ENCODE measurements at regions of chr22 and their contacts with region 1.

Region 1: DNA sequence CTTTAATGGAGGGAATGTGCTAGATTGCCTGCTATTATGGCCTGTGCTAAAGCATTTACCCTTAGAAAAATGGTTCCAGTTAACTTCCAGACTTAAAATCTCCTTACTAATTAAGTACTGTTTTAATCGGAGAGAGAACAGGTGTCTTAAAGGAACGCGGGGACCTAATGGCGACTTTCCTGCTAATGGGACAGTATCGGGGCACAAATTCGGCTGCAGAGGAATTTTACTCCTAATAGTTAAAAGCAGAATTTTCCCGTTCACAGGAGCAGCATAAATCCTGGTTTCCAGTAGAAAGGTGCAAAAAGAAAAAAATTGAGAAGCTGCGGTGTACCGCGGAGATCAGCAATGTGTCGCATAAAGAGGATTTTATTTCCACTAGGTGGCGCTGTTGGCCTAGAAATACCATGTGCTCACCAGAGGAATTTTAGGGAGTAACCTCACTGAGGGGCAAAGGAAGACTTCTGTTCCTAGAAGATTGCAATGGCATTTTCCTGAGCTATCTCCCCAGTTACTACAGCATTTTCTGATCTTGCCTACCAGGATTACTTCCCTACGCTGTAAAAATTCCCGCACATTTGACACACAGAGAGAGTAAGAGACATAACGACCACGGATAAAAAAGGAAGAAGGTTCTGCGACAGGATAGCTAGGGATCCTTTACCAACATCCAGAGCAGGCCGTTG is 44.5 kb downstream of the ZNF280B start:
- DNase-seq: peak in 30 of 35 experiments; percentile 2 to 79 (median 24)
- ATAC-seq: peak in 3 of 4 experiments; percentile 41 to 53 (median 42)
- H3K4me3 ChIP-seq: no peak overlapping the region
- H3K4me3 Mint-ChIP-seq: no peak overlapping the region
- H3K27ac ChIP-seq: no peak overlapping the region
- H3K27ac Mint-ChIP-seq: peak overlapping the region in 1 of 2 donors; percentile 1
- H3K4me1 ChIP-seq: peaks cover 0 to 5% of the 10 kb centered on the region in 2 experiments
- H3K4me1 Mint-ChIP-seq: no peaks in the 10 kb centered on the region
- H3K27me3 ChIP-seq: peaks cover 0 to 33% of the 10 kb centered on the region in 2 experiments
- H3K27me3 Mint-ChIP-seq: peaks cover 38 to 51% of the 10 kb centered on the region in 2 donors

Region 2: GRCh38 chr22:22838148-22838786 is 374.3 kb after region 1 on chr22:
- CTCF ChIA-PET with region 1: no interaction called
- POLR2A ChIA-PET with region 1: interaction called in 1 of 2 experiments, 12 read pairs
- DNase-seq: no peak
- ATAC-seq: peak in 2 of 4 experiments; percentile 45 to 71
- H3K4me3 ChIP-seq: no peak overlapping the region
- H3K4me3 Mint-ChIP-seq: no peak overlapping the region
- H3K27ac ChIP-seq: no peak overlapping the region
- H3K27ac Mint-ChIP-seq: peak overlapping the region; percentile 55 to 83
- H3K4me1 ChIP-seq: peaks cover 9 to 14% of the 10 kb centered on the region in 2 experiments
- H3K4me1 Mint-ChIP-seq: peaks cover 16 to 26% (median 25%) of the 10 kb centered on the region in 3 donors
- H3K27me3 ChIP-seq: no peaks in the 10 kb centered on the region
- H3K27me3 Mint-ChIP-seq: no peaks in the 10 kb centered on the region